H1 (cell line): ENCODE measurements at regions of chr16 and their contacts with region 1.

Region 1: DNA sequence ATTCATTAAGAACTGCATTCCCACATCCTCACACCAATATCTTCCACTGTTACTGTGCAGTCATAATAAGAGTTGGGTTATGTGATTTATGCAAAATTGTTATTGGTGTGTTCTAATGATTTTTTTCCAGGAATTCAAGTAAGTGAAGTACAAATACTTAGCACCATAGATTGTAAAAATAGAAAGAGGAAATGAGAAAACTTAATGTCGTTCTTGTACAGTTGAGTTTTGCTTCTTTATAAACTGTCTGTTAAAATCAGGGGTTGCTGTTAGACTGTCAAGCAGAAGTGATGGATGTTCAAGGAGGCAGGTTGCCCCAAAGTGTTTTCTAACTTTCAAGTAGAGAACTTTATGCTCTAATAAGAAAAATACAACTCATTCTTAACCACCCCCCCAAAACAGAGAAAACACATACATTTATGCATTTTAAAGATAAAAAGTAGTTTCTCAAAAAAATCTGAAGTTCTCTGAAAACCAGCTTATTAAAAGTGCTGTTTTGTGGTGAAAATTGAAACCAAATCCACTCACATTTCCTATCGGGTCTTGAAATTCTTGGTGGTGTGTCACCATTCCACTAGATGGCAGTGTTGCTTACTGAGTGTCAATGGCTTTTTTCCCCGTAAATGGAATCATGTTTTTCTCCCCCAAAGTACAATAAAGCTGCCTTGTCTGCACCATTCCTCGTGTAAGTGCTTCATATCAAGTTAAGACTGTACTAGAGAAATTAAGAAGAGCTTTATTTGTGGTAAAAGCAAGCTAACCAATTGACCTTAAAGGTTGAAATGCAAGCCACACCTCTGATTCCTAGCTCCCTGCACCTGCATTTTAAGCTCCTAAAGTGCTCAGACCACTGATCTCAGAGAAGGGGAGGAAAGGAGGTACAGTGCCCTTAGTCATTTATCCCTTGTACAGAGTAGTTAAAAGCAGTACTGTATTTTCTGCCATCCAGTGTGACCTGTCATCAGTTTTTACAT is 4.7 kb upstream of the IGSF6 start:
- DNase-seq: no peak
- H3K4me3 ChIP-seq: no peak overlapping the region
- H3K27ac ChIP-seq: no peak overlapping the region
- H3K4me1 ChIP-seq: no peaks in the 10 kb centered on the region
- H3K27me3 ChIP-seq: no peaks in the 10 kb centered on the region
- CTCF ChIP-seq: peak in 2 of 3 experiments; percentile 71 to 74; a peak in 3 of 4 replicates
- EP300 ChIP-seq: no peak
- POLR2A ChIP-seq: no peak
- RAD21 ChIP-seq: peak; percentile 80 to 82

Region 2: GRCh38 chr16:21646721-21647561 is 10.1 kb before region 1 on chr16:
- CTCF ChIA-PET with region 1: interaction called, 25 read pairs
- POLR2A ChIA-PET with region 1: no interaction called
- DNase-seq: no peak
- H3K4me3 ChIP-seq: no peak overlapping the region
- H3K27ac ChIP-seq: no peak overlapping the region
- H3K4me1 ChIP-seq: no peaks in the 10 kb centered on the region
- H3K27me3 ChIP-seq: no peaks in the 10 kb centered on the region
- CTCF ChIP-seq: no peak
- EP300 ChIP-seq: no peak
- POLR2A ChIP-seq: no peak
- RAD21 ChIP-seq: no peak

Region 3: DNA sequence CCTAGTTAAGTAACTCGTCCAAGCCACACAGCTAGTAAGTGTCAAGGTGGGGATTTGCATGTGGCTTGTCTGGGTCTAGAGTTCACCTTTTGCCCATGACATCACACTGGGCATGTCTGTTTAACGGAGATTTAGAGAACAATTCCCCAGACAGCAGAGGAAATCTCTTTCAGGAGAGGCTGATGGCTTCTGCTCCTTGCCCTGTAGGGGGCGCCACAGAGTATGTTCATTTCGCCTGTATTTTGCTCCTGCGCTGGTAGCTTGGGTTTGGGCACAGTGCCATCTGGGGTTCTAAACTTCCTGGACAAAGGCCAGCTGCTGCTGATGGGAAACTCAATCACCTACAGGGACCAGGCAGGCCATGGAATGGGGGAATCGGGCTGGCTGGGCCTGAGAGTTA is 27.1 kb after region 1 on chr16:
- CTCF ChIA-PET with region 1: interaction called, 26 read pairs
- POLR2A ChIA-PET with region 1: no interaction called
- DNase-seq: peak in 1 of 2 experiments; percentile 82
- H3K4me3 ChIP-seq: no peak overlapping the region
- H3K27ac ChIP-seq: no peak overlapping the region
- H3K4me1 ChIP-seq: no peaks in the 10 kb centered on the region
- H3K27me3 ChIP-seq: no peaks in the 10 kb centered on the region
- CTCF ChIP-seq: peak; percentile 72 to 85 (median 75)
- EP300 ChIP-seq: no peak
- POLR2A ChIP-seq: no peak
- RAD21 ChIP-seq: peak; percentile 33 to 59; a peak in 3 of 4 replicates

Region 4: GRCh38 chr16:21698169-21699032 is 41.3 kb after region 1 on chr16:
- CTCF ChIA-PET with region 1: interaction called, 11 read pairs
- POLR2A ChIA-PET with region 1: interaction called, 5 read pairs
- DNase-seq: no peak
- H3K4me3 ChIP-seq: no peak overlapping the region
- H3K27ac ChIP-seq: no peak overlapping the region
- H3K4me1 ChIP-seq: peaks cover 0 to 2% (median 1%) of the 10 kb centered on the region in 4 experiments; a peak in 2 of 7 replicates
- H3K27me3 ChIP-seq: no peaks in the 10 kb centered on the region
- CTCF ChIP-seq: peak in 1 of 3 experiments; percentile 7; a peak in 2 of 4 replicates
- EP300 ChIP-seq: no peak
- POLR2A ChIP-seq: no peak
- RAD21 ChIP-seq: peak; percentile 10 to 19; a peak in 2 of 4 replicates